ENCODE measurements at regions of chr10 and their contacts with region 1.

Region 1: DNA sequence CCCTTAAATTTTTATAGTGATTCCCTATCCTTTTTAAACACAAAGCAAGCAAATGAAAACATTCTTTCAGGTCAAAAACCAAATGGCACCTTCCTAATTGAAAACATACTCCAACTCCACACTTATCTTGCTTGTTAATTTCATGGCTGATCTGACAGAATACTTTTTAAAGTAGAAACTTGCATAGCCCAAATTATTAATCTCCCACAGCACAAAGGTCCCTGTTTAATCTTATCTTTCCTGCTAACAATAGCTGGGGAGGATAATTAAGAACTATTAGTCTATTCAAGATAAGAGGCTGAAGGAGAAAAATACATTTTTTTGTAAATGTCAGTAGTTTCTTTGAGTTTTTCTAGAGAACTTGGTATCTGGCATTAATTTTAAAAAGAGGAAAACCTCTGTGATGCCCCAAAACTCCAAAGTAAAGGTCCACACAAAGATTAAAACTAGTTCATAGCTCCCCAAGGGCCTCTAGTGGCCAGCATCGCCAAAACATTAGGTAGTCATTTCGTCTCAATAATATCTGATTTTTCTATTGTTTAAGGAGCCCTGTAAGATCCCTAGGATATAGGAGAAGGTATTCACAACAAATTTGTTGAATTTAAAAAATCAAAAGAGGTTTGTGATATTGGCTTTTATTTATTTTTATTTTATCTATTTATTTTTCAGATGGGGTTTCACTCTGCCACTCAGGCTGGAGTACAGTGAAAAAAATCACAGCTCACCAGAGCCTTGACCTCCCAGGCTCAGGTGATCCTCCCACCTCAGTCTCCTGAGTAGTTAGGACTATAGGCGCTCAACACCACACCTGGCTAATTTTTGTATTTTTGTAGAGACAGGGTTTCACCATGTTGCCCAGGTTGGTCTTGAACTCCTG is 14.7 kb downstream of the CDNF start:
- H3K4me3 Mint-ChIP-seq: no peak overlapping the region
- H3K27ac Mint-ChIP-seq: no peak overlapping the region
- H3K4me1 Mint-ChIP-seq: peaks cover 20% of the 10 kb centered on the region
- H3K27me3 Mint-ChIP-seq: no peaks in the 10 kb centered on the region

Region 2: DNA sequence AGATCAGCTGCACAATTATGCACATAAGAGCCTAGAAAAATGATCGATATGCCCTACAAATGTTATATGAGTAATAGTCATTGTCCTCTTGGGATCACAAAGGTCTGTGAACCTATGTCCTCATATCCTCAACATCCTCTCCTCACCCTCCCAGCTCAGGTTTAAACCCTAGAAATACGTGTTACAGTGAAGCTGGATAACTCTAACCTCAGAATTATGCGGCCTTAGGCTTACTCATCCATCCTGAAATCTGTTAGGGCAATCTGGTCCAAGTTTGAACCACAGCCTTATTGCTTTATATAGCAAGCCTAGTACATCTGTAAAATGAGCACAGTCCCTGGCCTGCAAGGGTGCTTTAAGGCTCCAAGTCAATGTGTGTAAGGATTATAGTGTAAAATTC is 408.2 kb before region 1 on chr10:
- intact Hi-C with region 1: no loop called
- H3K4me3 Mint-ChIP-seq: no peak overlapping the region
- H3K27ac Mint-ChIP-seq: no peak overlapping the region
- H3K4me1 Mint-ChIP-seq: peaks cover 3% of the 10 kb centered on the region
- H3K27me3 Mint-ChIP-seq: peaks cover 10% of the 10 kb centered on the region

Region 3: DNA sequence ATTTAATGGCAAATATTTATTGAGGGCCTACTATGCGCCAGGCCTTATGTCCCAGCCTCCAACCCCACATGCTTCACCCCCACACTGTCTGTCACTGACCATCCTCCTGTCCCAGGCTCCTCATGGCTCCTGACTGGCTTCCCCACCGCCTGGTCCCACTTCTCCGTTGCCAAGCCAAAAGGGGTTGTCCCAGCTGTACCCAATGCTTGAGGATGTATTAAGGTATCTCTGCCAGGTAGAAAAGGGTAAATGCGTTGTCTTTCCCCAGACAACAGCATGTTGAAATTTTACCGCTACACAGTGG is 323.6 kb before region 1 on chr10:
- intact Hi-C with region 1: loop called (anchors 1 kb)
- H3K4me3 Mint-ChIP-seq: no peak overlapping the region
- H3K27ac Mint-ChIP-seq: no peak overlapping the region
- H3K4me1 Mint-ChIP-seq: peaks cover 19% of the 10 kb centered on the region
- H3K27me3 Mint-ChIP-seq: peaks cover 18% of the 10 kb centered on the region

Region 4: DNA sequence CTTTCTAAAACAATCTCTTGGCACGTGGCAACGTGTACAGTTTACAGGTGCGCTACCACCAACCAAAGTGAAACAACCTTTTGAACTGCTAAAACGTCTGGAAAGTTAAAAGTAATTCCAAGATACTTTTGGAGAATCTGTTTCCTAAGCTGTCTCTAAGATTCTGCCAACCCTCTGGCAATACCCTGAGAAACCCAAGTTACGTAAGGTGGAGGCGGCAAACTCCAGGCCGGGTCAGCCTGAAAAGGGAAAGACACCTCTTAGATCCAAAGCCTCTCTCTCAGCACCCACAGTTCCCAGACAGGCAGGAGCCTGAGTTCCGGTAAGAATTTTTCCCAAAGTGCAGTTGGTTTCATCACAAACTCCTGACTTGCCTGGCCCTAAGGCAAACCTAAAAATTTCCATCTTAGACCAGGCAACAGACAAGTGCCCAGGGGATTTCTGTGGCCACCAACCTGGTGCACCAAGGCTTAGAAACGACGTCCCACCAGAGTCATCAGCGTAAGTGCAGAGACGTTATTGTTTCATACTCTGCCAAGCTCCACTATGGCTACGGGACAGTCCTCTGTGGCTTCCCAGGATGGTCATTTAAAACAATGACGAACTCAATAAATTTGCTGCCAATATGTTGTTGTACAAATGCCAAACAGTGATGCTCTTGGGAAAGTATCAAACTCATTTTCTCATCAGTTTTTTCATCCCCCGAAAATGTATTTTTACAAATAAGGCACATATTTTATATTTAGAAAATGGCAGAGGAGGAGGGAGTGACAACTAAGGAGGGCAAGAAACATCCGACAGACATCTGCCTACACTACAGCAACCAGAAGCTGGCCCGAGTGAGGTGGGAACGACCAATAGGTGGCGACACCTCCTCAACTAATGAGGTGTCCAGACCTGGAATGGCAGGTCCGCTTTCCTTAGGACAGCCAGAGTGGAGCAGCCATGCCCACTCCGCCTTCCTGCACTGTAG is 286.6 kb before region 1 on chr10:
- intact Hi-C with region 1: loop called (anchors 1 kb)
- H3K4me3 Mint-ChIP-seq: no peak overlapping the region
- H3K27ac Mint-ChIP-seq: no peak overlapping the region
- H3K4me1 Mint-ChIP-seq: peaks cover 17% of the 10 kb centered on the region
- H3K27me3 Mint-ChIP-seq: no peaks in the 10 kb centered on the region